ENCODE measurements at regions of chr20 and their contacts with region 1.

Region 1: GRCh38 chr20:49166534-49167449 is 21.3 kb downstream of the STAU1 start:
- DNase-seq: no peak
- H3K4me3 Mint-ChIP-seq: no peak overlapping the region
- H3K27ac Mint-ChIP-seq: peak overlapping the region; percentile 57
- H3K4me1 Mint-ChIP-seq: peaks cover 11% of the 10 kb centered on the region
- H3K27me3 Mint-ChIP-seq: no peaks in the 10 kb centered on the region
- CTCF ChIP-seq: no peak

Region 2: GRCh38 chr20:49179368-49180277 is 12.8 kb after region 1 on chr20:
- CTCF ChIA-PET with region 1: interaction called, 5 read pairs
- POLR2A ChIA-PET with region 1: interaction called, 59 read pairs
- intact Hi-C with region 1: no loop called
- DNase-seq: peak; percentile 11
- H3K4me3 Mint-ChIP-seq: no peak overlapping the region
- H3K27ac Mint-ChIP-seq: peak overlapping the region; percentile 19
- H3K4me1 Mint-ChIP-seq: peaks cover 8% of the 10 kb centered on the region
- H3K27me3 Mint-ChIP-seq: no peaks in the 10 kb centered on the region
- CTCF ChIP-seq: no peak

Region 3: GRCh38 chr20:49186535-49187329 is 19.9 kb after region 1 on chr20:
- CTCF ChIA-PET with region 1: interaction called, 5 read pairs
- POLR2A ChIA-PET with region 1: interaction called, 59 read pairs
- intact Hi-C with region 1: no loop called
- DNase-seq: peak; percentile 68
- H3K4me3 Mint-ChIP-seq: peak overlapping the region; percentile 83
- H3K27ac Mint-ChIP-seq: peak overlapping the region; percentile 75
- H3K4me1 Mint-ChIP-seq: peaks cover 6% of the 10 kb centered on the region
- H3K27me3 Mint-ChIP-seq: no peaks in the 10 kb centered on the region
- CTCF ChIP-seq: no peak

Measured in MCF 10A (cell line).